Ovary (tissue), 10 donors: ENCODE measurements at regions of chr5 and their contacts with region 1.

Region 1: GRCh38 chr5:122182491-122182921 is 53.2 kb downstream of the ZNF474 start:
- DNase-seq: peak; percentile 28 to 58 (median 44)
- H3K4me3 ChIP-seq: no peak overlapping the region
- H3K27ac ChIP-seq: no peak overlapping the region
- H3K4me1 ChIP-seq: peaks cover 3% of the 10 kb centered on the region
- H3K27me3 ChIP-seq: no peaks in the 10 kb centered on the region
- CTCF ChIP-seq: no peak
- EP300 ChIP-seq: no peak
- POLR2A ChIP-seq: no peak

Region 2: GRCh38 chr5:122137702-122138101 is 44.8 kb before region 1 on chr5:
- intact Hi-C with region 1: no loop called
- DNase-seq: no peak
- H3K4me3 ChIP-seq: no peak overlapping the region
- H3K27ac ChIP-seq: no peak overlapping the region
- H3K4me1 ChIP-seq: no peaks in the 10 kb centered on the region
- H3K27me3 ChIP-seq: no peaks in the 10 kb centered on the region
- CTCF ChIP-seq: no peak
- EP300 ChIP-seq: no peak
- POLR2A ChIP-seq: no peak

Region 3: DNA sequence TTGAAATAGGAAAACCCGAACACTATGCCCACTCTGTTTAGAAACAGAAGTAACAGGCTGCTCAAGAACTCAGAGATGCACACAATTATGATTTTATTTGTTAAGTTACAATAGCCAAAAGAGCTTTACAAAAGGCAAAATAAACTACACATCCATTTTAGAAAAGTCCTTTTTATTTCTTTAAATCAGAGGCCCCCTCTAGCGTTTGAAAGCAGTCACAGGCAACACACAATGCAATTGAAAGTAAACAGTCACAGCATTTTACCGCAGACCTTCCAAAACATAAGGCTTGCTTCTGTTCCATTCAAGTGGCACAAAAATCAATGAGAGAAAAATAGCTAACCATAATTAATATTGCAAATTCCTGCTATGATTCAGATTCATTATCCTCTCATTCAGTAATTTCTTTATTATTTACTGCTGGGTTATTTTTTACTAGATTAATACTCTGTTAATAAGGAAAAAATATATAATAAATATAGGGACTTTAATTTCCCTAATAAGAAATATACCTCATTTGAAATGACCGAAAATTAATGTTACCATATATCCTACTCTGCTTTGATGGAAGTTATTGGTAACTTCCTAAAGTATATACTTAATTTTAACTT is 1162.4 kb after region 1 on chr5:
- intact Hi-C with region 1: loop called in 1 of 4 experiments (anchors 10 kb)
- DNase-seq: peak; percentile 20 to 45 (median 23)
- H3K4me3 ChIP-seq: no peak overlapping the region
- H3K27ac ChIP-seq: no peak overlapping the region
- H3K4me1 ChIP-seq: no peaks in the 10 kb centered on the region
- H3K27me3 ChIP-seq: no peaks in the 10 kb centered on the region
- CTCF ChIP-seq: peak; percentile 37 to 61 (median 52)
- EP300 ChIP-seq: no peak
- POLR2A ChIP-seq: no peak